Activated CD4-positive, alpha-beta memory T cell treated with anti-CD3 and anti-CD28 coated beads for 36 hours (primary cell): ENCODE measurements at regions of chr5 and their contacts with region 1.

Region 1: GRCh38 chr5:39274398-39275085 is 55.2 kb upstream of the FYB1 start:
- DNase-seq: no peak
- H3K4me3 Mint-ChIP-seq: peak overlapping the region; percentile 74
- H3K27ac Mint-ChIP-seq: peak overlapping the region; percentile 95
- H3K4me1 Mint-ChIP-seq: peaks cover 53% of the 10 kb centered on the region
- H3K27me3 Mint-ChIP-seq: no peaks in the 10 kb centered on the region

Region 2: GRCh38 chr5:39148983-39149534 is 125.5 kb before region 1 on chr5:
- CTCF ChIA-PET with region 1: interaction called, 4 read pairs
- POLR2A ChIA-PET with region 1: no interaction called
- intact Hi-C with region 1: loop called (anchors 2 kb)
- DNase-seq: no peak
- H3K4me3 Mint-ChIP-seq: no peak overlapping the region
- H3K27ac Mint-ChIP-seq: peak overlapping the region; percentile 90
- H3K4me1 Mint-ChIP-seq: peaks cover 61% of the 10 kb centered on the region
- H3K27me3 Mint-ChIP-seq: no peaks in the 10 kb centered on the region

Region 3: DNA sequence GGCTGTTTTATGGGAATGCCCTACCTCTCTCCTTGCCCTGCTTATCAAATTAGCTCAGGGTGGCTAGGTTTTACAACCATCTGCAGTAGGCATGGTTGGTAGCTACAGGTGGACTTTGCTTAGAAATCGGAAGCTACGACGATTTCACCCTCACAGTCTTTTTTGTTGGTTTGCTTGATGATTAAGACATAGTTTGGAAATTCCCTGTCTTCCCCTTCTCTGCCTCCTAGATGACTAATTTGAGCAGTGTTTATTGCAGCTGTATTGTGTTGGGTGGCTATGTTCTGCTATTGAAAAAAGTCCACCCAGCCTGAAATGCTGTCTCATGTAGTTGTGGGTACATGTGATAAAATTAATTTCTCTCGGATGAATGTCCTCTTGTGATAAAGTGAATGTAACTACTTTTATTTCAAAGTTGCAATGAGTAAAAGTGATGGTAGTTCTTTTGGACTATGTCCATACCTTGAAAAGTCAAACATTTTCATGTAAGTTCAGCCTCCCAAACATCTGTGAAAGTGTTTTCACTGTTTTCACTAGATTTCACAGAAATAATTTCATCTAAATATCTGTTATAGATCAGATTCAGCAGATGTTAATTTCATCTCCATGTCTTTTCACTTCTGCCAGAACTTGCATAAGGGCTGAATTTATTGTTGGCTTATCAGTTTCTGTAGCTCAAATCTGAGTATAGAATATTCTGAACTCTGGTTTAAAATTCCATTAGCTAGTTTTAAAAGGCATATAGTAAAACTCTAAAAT is 17.9 kb before region 1 on chr5:
- CTCF ChIA-PET with region 1: interaction called, 3 read pairs
- POLR2A ChIA-PET with region 1: no interaction called
- intact Hi-C with region 1: loop called (anchors 2 kb)
- DNase-seq: no peak
- H3K4me3 Mint-ChIP-seq: peak overlapping the region; percentile 2
- H3K27ac Mint-ChIP-seq: peak overlapping the region; percentile 21
- H3K4me1 Mint-ChIP-seq: peaks cover 15% of the 10 kb centered on the region
- H3K27me3 Mint-ChIP-seq: no peaks in the 10 kb centered on the region